ENCODE measurements at regions of chr1 and their contacts with region 1.

Region 1: DNA sequence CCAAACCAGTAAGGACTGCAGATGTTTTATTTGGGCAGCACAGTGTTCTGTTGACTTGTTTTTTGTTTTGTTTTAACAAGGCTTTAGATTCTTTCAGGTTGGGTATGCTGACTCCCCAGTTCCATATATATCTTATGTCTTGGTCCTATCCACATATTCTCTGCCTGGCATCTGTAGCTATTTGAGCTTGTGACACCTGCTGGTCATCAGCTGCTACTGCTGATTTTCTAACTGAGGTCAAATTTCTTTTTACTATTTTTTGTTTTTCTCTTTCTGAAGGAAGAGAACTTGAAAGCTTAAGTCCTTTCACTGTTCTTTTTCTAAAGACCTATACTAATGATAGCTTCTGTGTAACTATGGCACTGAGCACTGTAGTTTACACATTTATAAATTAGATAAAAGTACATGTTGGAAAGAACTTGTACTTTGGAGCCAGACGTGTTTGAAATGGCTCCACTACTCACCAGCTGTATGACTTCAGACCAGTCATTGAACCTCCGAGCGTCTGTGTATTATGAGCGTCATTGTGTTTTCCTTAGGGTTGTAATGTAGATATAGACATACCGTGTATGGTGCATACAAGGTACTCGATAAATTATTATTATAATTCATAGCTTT is 109.4 kb downstream of the NRDC start:
- DNase-seq: no peak
- ATAC-seq: peak; percentile 82 to 87 (median 85)
- H3K4me3 ChIP-seq: no peak overlapping the region
- H3K27ac ChIP-seq: peak overlapping the region; percentile 48
- H3K4me1 ChIP-seq: peaks cover 7% of the 10 kb centered on the region
- H3K27me3 ChIP-seq: no peaks in the 10 kb centered on the region
- CTCF ChIP-seq: peak; percentile 83

Region 2: DNA sequence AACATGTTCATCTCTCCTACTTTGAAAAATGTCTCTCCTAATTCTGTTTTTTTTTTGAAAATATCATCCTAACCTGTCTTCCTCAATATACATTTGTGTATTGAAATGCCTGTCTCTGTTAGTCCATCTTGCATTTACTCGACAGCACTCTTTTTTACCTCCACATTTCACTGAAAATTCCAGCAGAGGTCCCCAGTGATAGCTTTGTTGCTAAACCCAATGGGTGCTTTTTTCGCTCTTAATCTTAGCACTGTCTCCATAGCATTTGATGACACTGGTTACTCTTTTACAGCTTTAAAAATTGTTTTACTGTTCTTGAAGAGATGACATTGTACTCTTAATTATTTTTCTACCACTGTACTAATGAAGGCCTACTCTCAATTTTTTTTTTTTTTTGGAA is 141.4 kb before region 1 on chr1:
- intact Hi-C with region 1: loop called (anchors 5 to 10 kb)
- DNase-seq: no peak
- ATAC-seq: peak in 2 of 4 donors; percentile 54
- H3K4me3 ChIP-seq: no peak overlapping the region
- H3K27ac ChIP-seq: peak overlapping the region; percentile 97
- H3K4me1 ChIP-seq: peaks cover 82% of the 10 kb centered on the region
- H3K27me3 ChIP-seq: no peaks in the 10 kb centered on the region
- CTCF ChIP-seq: no peak

Region 3: GRCh38 chr1:51750218-51750617 is 18.9 kb before region 1 on chr1:
- intact Hi-C with region 1: no loop called
- DNase-seq: no peak
- ATAC-seq: no peak
- H3K4me3 ChIP-seq: no peak overlapping the region
- H3K27ac ChIP-seq: peak overlapping the region; percentile 4
- H3K4me1 ChIP-seq: no peaks in the 10 kb centered on the region
- H3K27me3 ChIP-seq: no peaks in the 10 kb centered on the region
- CTCF ChIP-seq: no peak

Region 4: GRCh38 chr1:51878616-51879336 is 109.7 kb after region 1 on chr1 and contains the start of gene NRDC:
- intact Hi-C with region 1: no loop called
- DNase-seq: peak; percentile 100
- ATAC-seq: peak; percentile 94 to 97 (median 95)
- H3K4me3 ChIP-seq: peak within 1 kb of the TSS; percentile 77
- H3K27ac ChIP-seq: peak within 1 kb of the TSS; percentile 96
- H3K4me1 ChIP-seq: peaks cover 26% of the 10 kb centered on the region
- H3K27me3 ChIP-seq: peaks cover 0 to 14% (median 0%) of the 10 kb centered on the region in 3 donors
- CTCF ChIP-seq: no peak
- total RNA-seq, gene NRDC: 232 to 385 (median 288) TPM

Region 5: GRCh38 chr1:51997974-51998382 is 228.9 kb after region 1 on chr1:
- intact Hi-C with region 1: no loop called
- DNase-seq: no peak
- ATAC-seq: no peak
- H3K4me3 ChIP-seq: no peak overlapping the region
- H3K27ac ChIP-seq: no peak overlapping the region
- H3K4me1 ChIP-seq: no peaks in the 10 kb centered on the region
- H3K27me3 ChIP-seq: peaks cover 0 to 9% (median 0%) of the 10 kb centered on the region in 3 donors
- CTCF ChIP-seq: no peak